Prostate gland (tissue), 2 donors: ENCODE measurements at regions of chr19 and their contacts with region 1.

Region 1: GRCh38 chr19:40662921-40663694 is 27.3 kb downstream of the NUMBL start:
- DNase-seq: peak; percentile 88
- H3K4me3 ChIP-seq: peak overlapping the region; percentile 65 to 69
- H3K27ac ChIP-seq: peak overlapping the region; percentile 73 to 81
- H3K4me1 ChIP-seq: no peaks in the 10 kb centered on the region
- H3K27me3 ChIP-seq: no peaks in the 10 kb centered on the region
- CTCF ChIP-seq: peak in 3 of 4 experiments; percentile 99
- POLR2A ChIP-seq: peak; percentile 43

Region 2: DNA sequence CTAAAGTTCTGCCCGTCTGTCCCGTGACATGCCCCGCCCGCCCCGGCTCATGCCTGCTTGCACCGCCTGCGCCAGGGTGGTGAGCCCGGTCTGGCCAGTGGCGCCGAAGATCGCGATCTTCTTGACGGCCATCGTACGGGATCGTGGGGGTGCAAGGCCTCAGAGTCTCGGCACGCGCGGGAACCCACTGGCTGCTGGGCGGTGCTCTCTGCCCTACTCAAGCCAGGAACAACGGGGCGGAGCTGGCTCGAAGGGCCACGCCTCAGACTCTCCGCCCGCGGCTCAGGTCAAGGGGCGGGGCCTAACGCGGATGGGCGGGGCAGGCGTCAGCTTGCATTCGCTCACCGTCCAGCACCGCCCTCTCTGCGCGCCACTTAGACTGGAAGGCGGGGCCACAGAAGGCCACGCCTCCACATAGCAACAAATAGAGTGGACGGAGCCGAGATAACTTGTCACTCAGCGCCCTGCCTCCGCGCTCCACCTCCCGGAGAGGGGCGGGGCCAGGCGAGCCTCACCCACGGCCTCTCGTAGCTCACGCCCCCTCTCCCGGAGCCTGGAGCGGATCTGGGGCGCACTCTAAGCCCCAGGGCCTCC is 197.5 kb before region 1 on chr19 and contains the start of gene BLVRB:
- intact Hi-C with region 1: no loop called
- DNase-seq: peak; percentile 100
- H3K4me3 ChIP-seq: peak within 1 kb of the TSS; percentile 69 to 71
- H3K27ac ChIP-seq: peak within 1 kb of the TSS; percentile 96 to 97
- H3K4me1 ChIP-seq: peaks cover 11% of the 10 kb centered on the region
- H3K27me3 ChIP-seq: no peaks in the 10 kb centered on the region
- CTCF ChIP-seq: peak in 1 of 4 experiments; percentile 6
- POLR2A ChIP-seq: peak; percentile 98
- total RNA-seq, gene BLVRB: 101 to 261 TPM

Region 3: DNA sequence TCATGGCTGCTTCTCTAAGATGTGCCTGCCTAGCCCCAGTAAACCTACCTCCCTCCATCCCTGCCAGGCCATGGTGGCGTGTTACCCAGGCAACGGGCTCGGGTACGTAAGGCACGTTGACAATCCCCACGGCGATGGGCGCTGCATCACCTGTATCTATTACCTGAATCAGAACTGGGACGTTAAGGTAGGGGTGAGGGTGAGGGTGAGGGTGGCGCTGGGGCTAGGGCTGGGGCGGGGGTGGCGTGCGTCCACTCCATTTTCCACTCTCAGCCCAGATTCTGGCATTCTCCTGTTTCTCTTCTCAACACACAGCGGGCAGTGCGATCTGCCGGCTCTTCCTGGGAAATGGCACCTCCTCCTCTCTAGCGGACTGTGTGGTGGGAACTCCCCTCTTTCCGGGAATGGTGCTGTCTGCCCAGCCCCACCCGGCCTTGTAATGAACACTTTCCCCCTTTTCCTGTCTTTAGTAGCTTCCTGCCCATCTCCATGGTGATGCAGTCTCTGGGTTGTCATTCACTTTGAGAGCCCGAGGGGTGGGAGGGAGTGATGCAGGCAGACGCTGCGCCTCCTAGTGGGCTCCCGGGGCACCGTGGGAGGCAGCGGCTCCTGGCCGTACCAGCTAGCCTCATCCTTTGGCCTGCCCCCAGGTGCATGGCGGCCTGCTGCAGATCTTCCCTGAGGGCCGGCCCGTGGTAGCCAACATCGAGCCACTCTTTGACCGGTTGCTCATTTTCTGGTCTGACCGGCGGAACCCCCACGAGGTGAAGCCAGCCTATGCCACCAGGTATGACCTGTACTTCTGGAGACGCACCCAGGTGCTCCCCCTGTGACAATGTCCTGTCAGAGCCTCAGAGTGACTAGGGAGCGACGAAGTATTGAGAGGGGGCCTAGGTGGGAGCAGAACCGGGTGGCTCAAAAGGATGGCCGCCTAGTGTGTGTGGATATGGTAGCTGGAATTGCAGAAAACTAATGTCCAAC is 143.7 kb after region 1 on chr19:
- intact Hi-C with region 1: loop called (anchors 5 kb)
- DNase-seq: peak; percentile 54
- H3K4me3 ChIP-seq: no peak overlapping the region
- H3K27ac ChIP-seq: peak overlapping the region; percentile 72 to 97
- H3K4me1 ChIP-seq: peaks cover 55% of the 10 kb centered on the region
- H3K27me3 ChIP-seq: no peaks in the 10 kb centered on the region
- CTCF ChIP-seq: peak; percentile 48 to 84 (median 70)
- POLR2A ChIP-seq: no peak

Region 4: DNA sequence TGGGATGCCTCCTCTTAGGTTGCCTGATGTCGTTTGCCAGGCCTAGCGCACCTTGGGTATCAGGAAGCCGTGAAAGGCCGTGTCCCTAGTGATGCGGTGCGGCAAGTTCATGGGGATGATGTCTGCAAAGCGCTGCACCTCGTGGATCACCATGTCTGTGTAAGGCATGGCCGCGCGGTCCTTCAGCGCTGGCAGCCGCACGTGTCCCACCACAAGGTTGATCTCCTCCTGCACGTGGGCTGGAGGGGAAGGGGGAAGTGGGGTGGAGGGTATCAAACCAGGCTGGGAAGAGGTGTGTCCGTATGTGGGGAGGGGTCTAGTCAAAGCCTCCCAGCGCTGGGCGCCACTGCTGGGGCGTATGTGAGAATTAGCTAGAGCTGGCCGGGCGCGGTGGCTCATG is 159.1 kb after region 1 on chr19:
- intact Hi-C with region 1: loop called (anchors 5 kb)
- DNase-seq: no peak
- H3K4me3 ChIP-seq: no peak overlapping the region
- H3K27ac ChIP-seq: peak overlapping the region; percentile 50 to 74
- H3K4me1 ChIP-seq: peaks cover 3% of the 10 kb centered on the region
- H3K27me3 ChIP-seq: no peaks in the 10 kb centered on the region
- CTCF ChIP-seq: no peak
- POLR2A ChIP-seq: no peak

Region 5: GRCh38 chr19:40908976-40909375 is 245.9 kb after region 1 on chr19:
- intact Hi-C with region 1: loop called (anchors 10 kb)
- DNase-seq: no peak
- H3K4me3 ChIP-seq: no peak overlapping the region
- H3K27ac ChIP-seq: no peak overlapping the region
- H3K4me1 ChIP-seq: no peaks in the 10 kb centered on the region
- H3K27me3 ChIP-seq: no peaks in the 10 kb centered on the region
- CTCF ChIP-seq: no peak
- POLR2A ChIP-seq: no peak

Region 6: DNA sequence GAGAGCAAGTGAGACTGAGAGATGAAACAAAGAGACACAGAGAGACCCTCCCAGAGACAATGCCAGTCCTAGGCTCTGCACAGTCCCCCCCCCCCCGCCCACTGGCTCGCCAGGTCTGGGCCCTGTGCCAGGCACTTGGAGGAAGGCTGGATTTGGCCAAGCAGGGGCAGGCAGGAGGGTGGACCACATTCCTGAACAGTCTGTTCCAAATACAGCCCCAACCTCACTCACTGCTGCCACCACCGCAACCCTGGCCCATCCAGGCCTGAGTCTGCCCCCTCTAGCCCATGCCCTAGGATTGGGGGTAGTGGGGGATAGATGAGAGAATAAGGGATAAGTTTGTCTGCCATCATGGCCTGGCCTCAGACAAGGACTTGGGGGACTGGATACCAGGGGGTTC is 470.2 kb after region 1 on chr19:
- intact Hi-C with region 1: loop called (anchors 10 kb)
- DNase-seq: no peak
- H3K4me3 ChIP-seq: no peak overlapping the region
- H3K27ac ChIP-seq: no peak overlapping the region
- H3K4me1 ChIP-seq: no peaks in the 10 kb centered on the region
- H3K27me3 ChIP-seq: no peaks in the 10 kb centered on the region
- CTCF ChIP-seq: no peak
- POLR2A ChIP-seq: no peak